Colonic mucosa (tissue), 4 donors: ENCODE measurements at regions of chr1 and their contacts with region 1.

Region 1: DNA sequence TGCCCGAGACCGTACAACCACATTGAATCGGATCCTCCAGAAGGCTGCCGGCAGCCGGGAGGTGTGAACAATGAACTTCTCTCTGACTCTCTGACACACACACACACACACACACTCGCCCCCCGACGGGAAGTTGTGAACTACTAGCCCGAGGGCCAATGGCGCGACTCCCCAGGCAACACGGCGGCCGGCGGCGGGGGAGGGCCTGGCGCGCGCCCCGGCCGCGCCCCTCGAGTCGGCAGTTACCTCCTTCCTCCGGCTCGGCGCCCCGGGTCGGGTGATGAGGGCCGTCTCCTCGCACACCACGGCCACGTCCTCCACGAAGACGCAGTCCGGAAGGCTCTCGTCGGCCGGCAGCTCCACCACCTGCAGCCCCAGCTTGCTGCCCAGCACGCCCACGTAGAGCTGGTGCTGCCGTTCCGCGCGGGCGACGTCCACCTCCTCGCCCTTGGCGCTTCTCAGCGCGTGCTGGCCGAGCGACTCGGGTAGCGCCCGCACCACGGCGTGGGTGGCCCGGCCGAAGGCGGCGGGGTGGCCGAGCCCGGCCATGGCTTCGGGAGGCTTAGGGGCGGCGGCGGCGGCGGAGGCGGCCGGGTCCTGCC is 361 bp downstream of the DDAH1 start:
- DNase-seq: peak; percentile 80
- H3K4me3 ChIP-seq: peak overlapping the region; percentile 62
- H3K27ac ChIP-seq: peak overlapping the region; percentile 90
- H3K4me1 ChIP-seq: peaks cover 9% of the 10 kb centered on the region
- H3K27me3 ChIP-seq: no peaks in the 10 kb centered on the region
- CTCF ChIP-seq: no peak

Region 2: GRCh38 chr1:85344256-85344694 is 120.3 kb before region 1 on chr1:
- intact Hi-C with region 1: loop called (anchors 5 kb)
- DNase-seq: no peak
- H3K4me3 ChIP-seq: no peak overlapping the region
- H3K27ac ChIP-seq: no peak overlapping the region
- H3K4me1 ChIP-seq: no peaks in the 10 kb centered on the region
- H3K27me3 ChIP-seq: no peaks in the 10 kb centered on the region
- CTCF ChIP-seq: peak; percentile 41

Region 3: GRCh38 chr1:85406887-85407533 is 57.6 kb before region 1 on chr1:
- intact Hi-C with region 1: loop called (anchors 10 kb)
- DNase-seq: peak; percentile 60
- H3K4me3 ChIP-seq: no peak overlapping the region
- H3K27ac ChIP-seq: peak overlapping the region; percentile 42
- H3K4me1 ChIP-seq: peaks cover 5% of the 10 kb centered on the region
- H3K27me3 ChIP-seq: no peaks in the 10 kb centered on the region
- CTCF ChIP-seq: no peak